ENCODE measurements at regions of chr9 and their contacts with region 1.

Region 1: GRCh38 chr9:105881654-105882349 is 187.5 kb downstream of the TMEM38B start:
- DNase-seq: peak; percentile 73 to 87 (median 84)
- H3K4me3 ChIP-seq: no peak overlapping the region
- H3K27ac ChIP-seq: no peak overlapping the region
- H3K4me1 ChIP-seq: peaks cover 5 to 57% (median 29%) of the 10 kb centered on the region in 4 experiments
- H3K27me3 ChIP-seq: no peaks in the 10 kb centered on the region

Region 2: DNA sequence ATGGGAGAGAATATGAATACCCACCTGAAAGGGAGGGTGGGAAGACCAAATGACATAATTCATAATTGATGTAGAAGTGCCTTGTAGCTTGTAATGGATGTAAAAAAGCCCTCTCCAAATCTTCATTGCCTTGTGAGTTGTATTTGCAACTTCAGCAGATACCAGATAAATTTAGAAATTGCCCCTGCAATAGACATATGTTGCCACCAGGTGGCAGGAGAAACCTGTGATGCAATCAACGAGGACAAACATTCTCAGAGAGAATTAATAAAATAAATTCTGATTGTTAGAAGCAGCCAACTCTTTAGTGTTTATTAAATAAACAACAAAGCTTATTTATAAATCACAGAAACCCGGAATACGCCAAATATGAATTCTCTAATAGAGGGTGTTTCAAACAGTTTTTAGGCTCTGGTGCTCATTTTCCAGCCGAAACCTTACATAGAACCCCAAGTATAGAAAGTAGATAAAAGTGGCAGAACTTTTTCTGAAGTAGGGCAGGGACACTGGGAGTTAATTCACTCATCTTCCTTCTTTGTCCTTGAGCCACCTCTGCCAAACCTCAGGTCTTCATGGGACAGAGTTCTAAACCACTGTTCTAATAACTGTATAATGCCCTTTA is 39.7 kb before region 1 on chr9:
- CTCF ChIA-PET with region 1: interaction called, 117 read pairs
- POLR2A ChIA-PET with region 1: interaction called, 3 read pairs
- DNase-seq: peak; percentile 40 to 66 (median 54)
- H3K4me3 ChIP-seq: no peak overlapping the region
- H3K27ac ChIP-seq: no peak overlapping the region
- H3K4me1 ChIP-seq: no peaks in the 10 kb centered on the region
- H3K27me3 ChIP-seq: no peaks in the 10 kb centered on the region

Region 3: GRCh38 chr9:105850852-105851500 is 30.8 kb before region 1 on chr9:
- CTCF ChIA-PET with region 1: interaction called, 117 read pairs
- POLR2A ChIA-PET with region 1: no interaction called
- DNase-seq: peak; percentile 14 to 85 (median 77)
- H3K4me3 ChIP-seq: peak overlapping the region in 1 of 7 experiments; percentile 34
- H3K27ac ChIP-seq: peak overlapping the region in 1 of 2 experiments; percentile 19
- H3K4me1 ChIP-seq: peaks cover 0 to 22% (median 19%) of the 10 kb centered on the region in 4 experiments
- H3K27me3 ChIP-seq: no peaks in the 10 kb centered on the region

Region 4: DNA sequence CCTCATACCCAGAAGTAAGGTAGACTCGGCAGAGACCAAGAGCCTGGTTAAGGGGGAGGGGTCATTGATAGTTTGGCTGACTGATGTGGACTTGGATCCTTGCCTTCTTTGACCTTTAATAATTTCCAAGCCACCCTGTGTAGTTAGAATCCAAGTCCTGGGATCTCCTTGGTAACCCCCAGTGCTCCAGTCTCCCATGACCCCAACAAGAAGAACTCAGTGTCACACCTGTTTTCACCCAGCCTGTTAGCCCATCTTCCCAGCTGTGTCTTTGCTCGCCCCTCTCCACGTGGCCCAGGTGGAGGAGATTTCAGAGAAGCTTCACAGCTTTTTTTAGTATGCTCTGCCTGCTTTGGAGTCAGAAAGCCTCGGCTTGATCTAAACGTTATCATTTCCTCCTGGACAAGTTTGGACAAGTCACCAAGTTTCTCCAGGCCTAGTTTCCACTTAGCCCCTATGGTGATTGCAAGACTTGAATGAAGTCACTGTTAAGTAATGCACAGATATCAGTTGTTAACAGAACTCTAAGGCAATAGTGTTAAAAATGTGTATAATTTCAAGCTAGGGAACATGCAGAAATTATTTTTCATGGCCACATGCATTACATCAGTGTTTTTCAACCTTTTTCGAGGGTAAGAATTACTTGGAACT is 17.4 kb before region 1 on chr9:
- CTCF ChIA-PET with region 1: interaction called, 30 read pairs
- POLR2A ChIA-PET with region 1: no interaction called
- DNase-seq: no peak
- H3K4me3 ChIP-seq: no peak overlapping the region
- H3K27ac ChIP-seq: no peak overlapping the region
- H3K4me1 ChIP-seq: peaks cover 0 to 22% (median 6%) of the 10 kb centered on the region in 4 experiments
- H3K27me3 ChIP-seq: no peaks in the 10 kb centered on the region